GM12878 (cell line): ENCODE measurements at regions of chr10 and their contacts with region 1.

Region 1: GRCh38 chr10:17512341-17513001 is 58.1 kb upstream of the ST8SIA6 start:
- DNase-seq: no peak
- ATAC-seq: peak; percentile 33
- H3K4me3 ChIP-seq: no peak overlapping the region
- H3K27ac ChIP-seq: no peak overlapping the region
- H3K4me1 ChIP-seq: peaks cover 30% of the 10 kb centered on the region
- H3K27me3 ChIP-seq: no peaks in the 10 kb centered on the region; a peak in 1 of 4 replicates
- CTCF ChIP-seq: no peak
- EP300 ChIP-seq: no peak
- POLR2A ChIP-seq: no peak
- RAD21 ChIP-seq: no peak

Region 2: DNA sequence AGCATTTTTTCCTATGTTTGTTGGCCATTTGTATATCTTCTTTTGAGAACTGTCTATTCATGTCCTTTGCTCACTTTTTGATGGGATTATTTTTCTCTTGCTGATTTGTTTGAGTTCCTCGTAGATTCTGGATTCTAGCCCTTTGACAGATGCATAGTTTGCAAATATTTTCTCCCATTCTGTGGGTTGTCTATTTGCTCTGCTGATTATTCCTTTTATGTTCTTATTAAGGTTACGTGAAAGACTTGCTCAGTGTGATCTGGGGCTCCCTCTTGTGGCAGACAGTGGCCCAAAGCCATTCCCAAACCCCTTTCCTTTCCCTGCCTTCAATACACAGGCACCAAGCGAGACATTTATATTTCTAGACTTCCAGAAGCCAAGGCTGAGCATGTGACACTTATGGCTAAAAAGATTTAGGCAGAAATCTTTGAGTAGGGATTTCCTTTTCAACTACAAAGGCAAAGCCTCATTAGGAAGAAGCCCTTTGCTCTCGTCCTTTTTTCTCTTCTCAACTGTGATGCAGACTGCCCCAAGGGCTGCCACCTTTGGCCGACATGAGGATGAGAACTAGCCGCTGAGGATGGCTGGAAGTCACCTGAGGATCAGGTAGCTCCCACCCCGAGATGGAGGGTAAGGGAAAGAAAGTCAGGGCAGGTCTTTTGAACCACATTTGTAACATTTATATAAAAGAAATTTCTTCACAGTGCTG is 81.7 kb before region 1 on chr10:
- CTCF ChIA-PET with region 1: interaction called, 5 read pairs
- POLR2A ChIA-PET with region 1: no interaction called
- RAD21 ChIA-PET with region 1: interaction called, 3 read pairs
- SMC1A ChIA-PET with region 1: interaction called, 4 read pairs
- in situ Hi-C with region 1: no loop called
- intact Hi-C with region 1: loop called (anchors 5 kb)
- DNase-seq: no peak
- ATAC-seq: peak; percentile 72
- H3K4me3 ChIP-seq: no peak overlapping the region
- H3K27ac ChIP-seq: no peak overlapping the region
- H3K4me1 ChIP-seq: peaks cover 12% of the 10 kb centered on the region; the same call in 1 of the 2 replicates
- H3K27me3 ChIP-seq: peaks cover 0 to 7% of the 10 kb centered on the region in 2 experiments; a peak in 1 of 4 replicates
- CTCF ChIP-seq: peak; percentile 74 to 84 (median 75)
- EP300 ChIP-seq: no peak
- POLR2A ChIP-seq: no peak
- RAD21 ChIP-seq: peak; percentile 64

Region 3: DNA sequence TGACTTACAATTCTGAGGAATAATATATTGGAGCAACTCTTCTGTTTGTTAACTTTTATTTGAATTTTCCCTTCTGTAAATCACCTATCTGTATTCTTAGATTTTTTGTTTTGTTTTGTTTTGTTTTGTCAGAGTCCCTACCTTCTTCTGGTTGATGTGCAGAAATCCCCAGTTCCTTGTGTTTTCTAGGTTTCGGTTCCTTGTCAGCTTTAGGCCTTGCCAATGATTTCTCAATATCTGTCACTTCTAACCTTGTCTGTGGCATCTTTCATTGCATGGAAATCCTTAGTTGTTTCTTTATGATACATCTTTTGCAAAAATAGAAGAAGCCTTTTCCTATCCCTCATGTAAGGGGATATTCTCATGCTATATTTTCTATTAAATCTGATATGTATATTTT is 36.4 kb before region 1 on chr10:
- CTCF ChIA-PET with region 1: no interaction called
- POLR2A ChIA-PET with region 1: no interaction called
- RAD21 ChIA-PET with region 1: interaction called, 3 read pairs
- SMC1A ChIA-PET with region 1: interaction called, 5 read pairs
- in situ Hi-C with region 1: no loop called
- intact Hi-C with region 1: loop called (anchors 2 kb)
- DNase-seq: peak; percentile 32
- ATAC-seq: peak; percentile 91
- H3K4me3 ChIP-seq: no peak overlapping the region
- H3K27ac ChIP-seq: no peak overlapping the region
- H3K4me1 ChIP-seq: no peaks in the 10 kb centered on the region
- H3K27me3 ChIP-seq: no peaks in the 10 kb centered on the region
- CTCF ChIP-seq: no peak
- EP300 ChIP-seq: peak; percentile 19 to 49; a peak in 1 of 4 replicates
- POLR2A ChIP-seq: no peak
- RAD21 ChIP-seq: no peak

Region 4: GRCh38 chr10:17497446-17498030 is 14.9 kb before region 1 on chr10:
- CTCF ChIA-PET with region 1: interaction called, 18 read pairs
- POLR2A ChIA-PET with region 1: interaction called, 3 read pairs
- RAD21 ChIA-PET with region 1: interaction called, 3 read pairs
- SMC1A ChIA-PET with region 1: interaction called, 48 read pairs
- in situ Hi-C with region 1: no loop called
- intact Hi-C with region 1: no loop called
- DNase-seq: no peak
- ATAC-seq: no peak
- H3K4me3 ChIP-seq: no peak overlapping the region
- H3K27ac ChIP-seq: no peak overlapping the region
- H3K4me1 ChIP-seq: no peaks in the 10 kb centered on the region
- H3K27me3 ChIP-seq: peaks cover 0 to 3% of the 10 kb centered on the region in 2 experiments; a peak in 1 of 4 replicates
- CTCF ChIP-seq: no peak
- EP300 ChIP-seq: no peak
- POLR2A ChIP-seq: no peak
- RAD21 ChIP-seq: no peak

Region 5: GRCh38 chr10:17562614-17563013 is 50.1 kb after region 1 on chr10:
- CTCF ChIA-PET with region 1: interaction called, 4 read pairs
- POLR2A ChIA-PET with region 1: interaction called, 5 read pairs
- RAD21 ChIA-PET with region 1: interaction called, 13 read pairs
- SMC1A ChIA-PET with region 1: interaction called, 24 read pairs
- in situ Hi-C with region 1: no loop called
- intact Hi-C with region 1: loop called (anchors 2 kb)
- DNase-seq: no peak
- ATAC-seq: no peak
- H3K4me3 ChIP-seq: no peak overlapping the region
- H3K27ac ChIP-seq: no peak overlapping the region
- H3K4me1 ChIP-seq: peaks cover 10% of the 10 kb centered on the region
- H3K27me3 ChIP-seq: no peaks in the 10 kb centered on the region
- CTCF ChIP-seq: no peak
- EP300 ChIP-seq: no peak
- POLR2A ChIP-seq: no peak
- RAD21 ChIP-seq: no peak

Region 6: DNA sequence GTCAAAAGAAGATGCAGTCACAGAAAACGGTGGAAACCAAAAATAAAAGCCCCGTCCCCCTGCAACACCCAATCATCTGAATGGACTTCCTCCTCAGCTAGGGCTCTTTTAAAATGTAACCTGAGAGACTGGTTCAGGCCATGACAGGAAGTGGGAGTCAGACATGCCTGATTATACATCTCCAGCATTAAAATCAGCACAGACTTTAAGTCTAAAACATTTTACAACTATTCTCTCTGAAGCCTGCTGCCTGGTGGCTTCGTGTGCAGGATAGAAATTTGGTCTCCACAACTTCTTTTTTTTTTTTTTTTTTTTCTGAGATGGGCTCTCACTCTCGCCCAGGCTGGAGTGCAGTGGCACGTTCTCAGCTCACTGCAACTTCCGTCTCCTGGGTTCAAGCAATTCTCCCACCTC is 74.4 kb after region 1 on chr10:
- CTCF ChIA-PET with region 1: no interaction called
- POLR2A ChIA-PET with region 1: interaction called, 5 read pairs
- RAD21 ChIA-PET with region 1: interaction called, 4 read pairs
- SMC1A ChIA-PET with region 1: interaction called, 5 read pairs
- in situ Hi-C with region 1: no loop called
- intact Hi-C with region 1: loop called (anchors 5 kb)
- DNase-seq: no peak
- ATAC-seq: peak; percentile 76
- H3K4me3 ChIP-seq: no peak overlapping the region
- H3K27ac ChIP-seq: no peak overlapping the region
- H3K4me1 ChIP-seq: peaks cover 4% of the 10 kb centered on the region
- H3K27me3 ChIP-seq: no peaks in the 10 kb centered on the region
- CTCF ChIP-seq: no peak
- EP300 ChIP-seq: no peak
- POLR2A ChIP-seq: no peak
- RAD21 ChIP-seq: no peak